ENCODE measurements at regions of chr11 and their contacts with region 1.

Region 1: GRCh38 chr11:103464420-103464819 is 355.2 kb downstream of the DYNC2H1 start:
- DNase-seq: no peak
- H3K4me3 ChIP-seq: no peak overlapping the region
- H3K27ac ChIP-seq: no peak overlapping the region
- H3K4me1 ChIP-seq: no peaks in the 10 kb centered on the region
- H3K27me3 ChIP-seq: no peaks in the 10 kb centered on the region
- CTCF ChIP-seq: no peak
- EP300 ChIP-seq: no peak
- POLR2A ChIP-seq: no peak

Region 2: DNA sequence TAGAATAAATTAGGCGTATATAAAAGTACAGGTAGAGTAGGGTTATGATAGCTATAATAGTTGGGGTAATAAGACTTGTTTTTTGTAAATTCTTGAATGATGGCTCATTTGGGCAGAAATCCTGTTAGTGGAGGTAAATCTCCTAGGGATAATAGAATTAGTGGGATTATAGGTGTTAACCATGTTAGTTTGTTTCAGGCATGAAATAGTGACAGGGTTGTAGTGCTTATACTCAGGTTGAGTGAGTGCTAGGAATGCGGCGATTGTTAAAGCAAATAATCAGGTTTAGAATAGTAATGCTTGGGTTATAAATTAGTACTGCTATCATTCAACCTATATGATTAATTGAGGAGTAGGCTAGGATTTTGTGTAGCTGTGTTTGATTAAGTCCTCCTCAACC is 58.1 kb before region 1 on chr11:
- in situ Hi-C with region 1: loop called in 1 of 4 experiments (anchors 10 kb)
- intact Hi-C with region 1: no loop called
- DNase-seq: no peak
- H3K4me3 ChIP-seq: no peak overlapping the region
- H3K27ac ChIP-seq: no peak overlapping the region
- H3K4me1 ChIP-seq: no peaks in the 10 kb centered on the region
- H3K27me3 ChIP-seq: no peaks in the 10 kb centered on the region
- CTCF ChIP-seq: no peak
- EP300 ChIP-seq: no peak
- POLR2A ChIP-seq: no peak

Measured in transverse colon (tissue), 4 donors.